ENCODE measurements at regions of chr12 and their contacts with region 1.

Region 1: DNA sequence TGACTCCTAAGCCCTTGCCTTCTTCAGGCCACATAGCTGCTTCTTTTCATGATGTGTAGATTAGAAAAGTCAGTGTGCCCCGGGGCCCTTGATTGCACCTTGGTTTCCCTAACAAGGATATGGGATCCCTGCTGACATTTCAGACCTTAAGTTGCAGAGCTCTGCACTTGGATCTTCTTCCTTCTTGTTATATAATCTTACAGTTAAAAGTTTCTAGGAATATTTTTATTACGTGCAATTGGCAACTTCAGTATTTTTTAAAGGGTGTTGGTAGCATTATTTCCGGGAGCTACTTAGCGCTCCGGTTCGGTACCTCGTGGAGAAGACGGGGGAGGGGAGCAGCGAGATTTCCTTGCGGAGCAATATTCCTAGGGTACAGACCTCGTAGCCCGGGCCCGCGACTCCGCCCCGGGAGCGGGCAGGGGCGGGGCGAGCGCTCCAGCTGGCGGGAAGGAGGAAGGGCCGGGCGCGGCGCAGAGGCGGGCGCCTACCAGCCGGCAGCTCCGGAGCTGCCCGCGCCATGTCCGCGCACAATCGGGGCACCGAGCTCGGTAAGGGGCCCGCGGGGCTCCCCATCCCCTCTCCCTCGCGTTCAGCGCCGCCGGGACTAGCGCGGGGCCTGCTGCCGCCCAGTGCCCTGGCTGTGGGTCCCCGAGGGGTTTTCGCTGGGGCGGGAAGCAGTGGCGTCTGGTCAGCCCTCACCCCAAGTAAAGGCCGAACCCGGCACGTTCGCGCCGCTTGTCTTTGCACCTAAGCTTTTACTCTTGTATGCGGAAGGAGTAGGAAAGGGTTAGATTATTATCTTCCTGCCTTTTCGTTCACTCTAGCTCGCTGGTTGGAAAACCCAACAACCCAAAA is at the start of gene DERA:
- DNase-seq: peak; percentile 76
- CTCF ChIP-seq: no peak

Region 2: DNA sequence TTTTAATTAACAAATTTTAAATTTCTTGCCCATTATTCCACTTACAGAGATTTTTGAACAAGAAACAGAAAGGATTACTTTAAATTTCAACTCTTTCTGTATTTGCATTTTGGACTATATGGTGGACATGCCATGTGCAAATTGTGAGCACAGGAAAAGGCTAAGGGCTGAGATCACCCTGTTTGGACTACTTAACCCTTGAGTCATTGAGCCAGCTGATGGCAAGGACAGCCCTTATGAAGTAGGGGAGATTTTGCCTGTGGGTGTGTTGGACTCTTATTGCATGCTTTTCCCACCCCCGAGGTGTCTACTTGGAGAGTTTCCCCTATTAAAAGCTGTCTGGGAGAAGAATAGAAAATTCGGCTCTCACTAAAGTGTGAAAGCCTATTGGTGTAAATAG is 17.3 kb after region 1 on chr12:
- CTCF ChIA-PET with region 1: interaction called, 15 read pairs
- POLR2A ChIA-PET with region 1: no interaction called
- DNase-seq: no peak
- CTCF ChIP-seq: no peak

Measured in GM10248 (cell line).